Activated CD4-positive, alpha-beta T cell treated with anti-CD3 and anti-CD28 coated beads, Interleukin-2, amount 10 ng/mL, durations not matched to agents 24 days and 14 days (primary cell): ENCODE measurements at regions of chr3 and their contacts with region 1.

Region 1: DNA sequence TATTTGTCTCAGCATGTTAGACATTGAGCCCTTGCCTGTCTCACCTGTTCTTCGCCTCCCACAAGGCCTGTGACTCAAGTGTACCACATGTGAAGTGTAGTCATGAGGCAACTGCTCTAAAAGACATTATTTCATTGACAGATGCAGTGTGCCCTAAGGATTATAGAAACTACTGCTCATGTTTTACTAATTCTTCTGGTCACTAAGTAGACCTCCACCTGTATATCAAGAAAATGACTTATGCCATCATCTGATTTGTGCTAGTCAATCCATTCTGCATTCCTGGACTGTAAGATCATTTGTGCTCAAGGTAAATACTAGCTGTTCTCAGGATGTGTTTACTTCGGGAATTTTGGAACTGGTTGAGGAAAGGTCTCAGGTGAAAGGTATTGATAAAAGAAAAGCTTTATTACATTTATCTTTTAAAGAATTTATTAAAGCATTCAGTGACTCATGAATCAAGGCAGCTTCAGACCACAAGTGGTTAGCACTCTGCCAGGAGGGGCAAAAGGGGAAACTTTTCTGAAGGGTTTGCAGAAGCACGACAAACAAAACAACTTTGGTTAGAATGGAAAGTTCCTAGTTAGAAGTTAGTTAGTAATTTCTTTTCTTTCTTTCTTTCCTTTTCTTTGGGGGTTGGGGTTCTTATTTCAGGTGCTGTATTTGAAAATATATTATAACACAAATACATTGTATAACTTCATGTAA is 465.3 kb upstream of the CBLB start:
- DNase-seq: peak; percentile 77
- H3K4me3 Mint-ChIP-seq: peak overlapping the region; percentile 75
- H3K27ac Mint-ChIP-seq: peak overlapping the region; percentile 91
- H3K4me1 Mint-ChIP-seq: peaks cover 74% of the 10 kb centered on the region
- H3K27me3 Mint-ChIP-seq: no peaks in the 10 kb centered on the region

Region 2: GRCh38 chr3:105752744-105753415 is 581.2 kb before region 1 on chr3:
- intact Hi-C with region 1: loop called (anchors 2 kb)
- DNase-seq: peak; percentile 83
- H3K4me3 Mint-ChIP-seq: peak overlapping the region; percentile 64
- H3K27ac Mint-ChIP-seq: peak overlapping the region; percentile 95
- H3K4me1 Mint-ChIP-seq: peaks cover 67% of the 10 kb centered on the region
- H3K27me3 Mint-ChIP-seq: no peaks in the 10 kb centered on the region

Region 3: DNA sequence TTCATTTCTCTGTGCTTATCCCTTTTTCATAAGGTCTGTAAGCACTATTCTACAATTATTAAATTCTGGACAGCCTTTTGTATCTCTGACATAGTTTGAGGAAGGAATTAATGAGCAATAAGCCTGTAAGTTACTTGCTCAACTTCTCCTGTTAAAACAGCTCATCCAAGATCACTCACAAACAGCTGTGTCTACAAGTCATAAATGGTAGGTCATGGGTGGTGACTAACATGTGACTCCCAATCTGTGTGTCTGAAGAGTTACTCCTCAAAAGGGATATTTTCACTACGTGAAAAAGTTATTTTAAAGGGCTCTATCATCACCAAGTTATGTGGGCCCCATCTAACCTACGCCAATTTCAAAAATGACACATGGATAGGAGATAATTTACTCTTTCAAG is 320.1 kb before region 1 on chr3:
- intact Hi-C with region 1: loop called (anchors 1 kb)
- DNase-seq: no peak
- H3K4me3 Mint-ChIP-seq: no peak overlapping the region
- H3K27ac Mint-ChIP-seq: peak overlapping the region; percentile 51
- H3K4me1 Mint-ChIP-seq: peaks cover 31% of the 10 kb centered on the region
- H3K27me3 Mint-ChIP-seq: no peaks in the 10 kb centered on the region

Region 4: DNA sequence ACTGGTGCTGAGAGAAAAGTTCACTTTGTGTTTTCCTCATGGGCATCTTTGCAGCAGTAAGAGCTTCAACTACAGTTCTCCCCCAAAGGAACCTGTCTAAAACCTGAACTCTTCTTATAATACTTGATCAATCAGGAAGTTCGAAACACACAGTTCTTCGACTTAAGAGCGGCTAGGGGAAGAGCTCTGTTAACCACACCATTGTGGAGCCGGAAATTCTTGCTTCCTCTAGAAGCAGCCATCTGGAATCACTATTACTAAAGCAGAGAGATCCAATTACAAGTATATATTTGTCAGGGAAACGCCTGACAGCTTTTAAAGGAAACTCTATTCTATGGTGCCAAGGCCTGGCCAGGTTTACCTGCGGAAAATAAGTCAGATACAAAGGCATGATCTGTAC is 127.9 kb before region 1 on chr3:
- intact Hi-C with region 1: loop called (anchors 1 kb)
- DNase-seq: peak; percentile 75
- H3K4me3 Mint-ChIP-seq: peak overlapping the region; percentile 65
- H3K27ac Mint-ChIP-seq: peak overlapping the region; percentile 97
- H3K4me1 Mint-ChIP-seq: peaks cover 39% of the 10 kb centered on the region
- H3K27me3 Mint-ChIP-seq: no peaks in the 10 kb centered on the region

Region 5: DNA sequence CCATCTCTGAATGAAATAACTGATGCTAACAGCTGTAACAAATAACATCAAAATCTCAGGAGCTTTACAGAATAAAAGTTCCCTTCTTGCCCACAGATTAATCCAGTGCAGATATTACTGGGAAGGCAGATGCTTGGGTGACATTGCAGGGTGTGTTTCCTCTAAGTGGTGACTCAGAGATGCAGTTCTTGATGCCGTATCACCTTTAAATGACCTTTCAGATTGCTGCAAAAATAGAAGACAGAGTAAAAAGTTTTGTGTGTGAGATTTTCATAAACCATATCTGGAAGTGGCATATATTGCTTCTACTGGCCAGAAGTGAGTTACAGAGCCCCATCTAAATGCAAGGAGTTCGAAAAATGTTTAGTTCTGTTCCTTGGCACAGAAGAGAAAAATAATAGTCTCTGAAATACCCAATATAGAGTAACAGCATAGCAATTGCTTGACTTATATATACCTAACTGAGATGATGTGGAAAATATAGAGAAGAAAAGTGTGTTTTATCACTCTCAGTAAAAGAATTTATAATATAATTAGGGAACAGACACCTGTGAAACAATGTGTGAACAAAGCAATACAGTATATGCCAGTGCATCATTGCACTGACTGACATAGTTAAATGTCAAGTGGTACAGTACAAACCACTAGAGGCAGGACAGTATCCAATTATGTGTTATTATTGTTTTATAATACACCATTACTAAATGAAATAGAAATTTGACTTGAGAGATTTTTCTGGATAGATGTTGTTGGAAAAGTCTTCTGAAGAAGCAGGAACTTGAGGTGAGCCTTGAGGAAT is 34.6 kb before region 1 on chr3:
- intact Hi-C with region 1: loop called (anchors 1 kb)
- DNase-seq: peak; percentile 69
- H3K4me3 Mint-ChIP-seq: peak overlapping the region; percentile 17
- H3K27ac Mint-ChIP-seq: peak overlapping the region; percentile 59
- H3K4me1 Mint-ChIP-seq: peaks cover 42% of the 10 kb centered on the region
- H3K27me3 Mint-ChIP-seq: no peaks in the 10 kb centered on the region

Region 6: GRCh38 chr3:106534206-106534605 is 200.1 kb after region 1 on chr3:
- intact Hi-C with region 1: loop called (anchors 2 kb)
- DNase-seq: peak; percentile 81
- H3K4me3 Mint-ChIP-seq: no peak overlapping the region
- H3K27ac Mint-ChIP-seq: peak overlapping the region; percentile 81
- H3K4me1 Mint-ChIP-seq: peaks cover 17% of the 10 kb centered on the region
- H3K27me3 Mint-ChIP-seq: no peaks in the 10 kb centered on the region